ENCODE measurements at regions of chr17 and their contacts with region 1.

Region 1: DNA sequence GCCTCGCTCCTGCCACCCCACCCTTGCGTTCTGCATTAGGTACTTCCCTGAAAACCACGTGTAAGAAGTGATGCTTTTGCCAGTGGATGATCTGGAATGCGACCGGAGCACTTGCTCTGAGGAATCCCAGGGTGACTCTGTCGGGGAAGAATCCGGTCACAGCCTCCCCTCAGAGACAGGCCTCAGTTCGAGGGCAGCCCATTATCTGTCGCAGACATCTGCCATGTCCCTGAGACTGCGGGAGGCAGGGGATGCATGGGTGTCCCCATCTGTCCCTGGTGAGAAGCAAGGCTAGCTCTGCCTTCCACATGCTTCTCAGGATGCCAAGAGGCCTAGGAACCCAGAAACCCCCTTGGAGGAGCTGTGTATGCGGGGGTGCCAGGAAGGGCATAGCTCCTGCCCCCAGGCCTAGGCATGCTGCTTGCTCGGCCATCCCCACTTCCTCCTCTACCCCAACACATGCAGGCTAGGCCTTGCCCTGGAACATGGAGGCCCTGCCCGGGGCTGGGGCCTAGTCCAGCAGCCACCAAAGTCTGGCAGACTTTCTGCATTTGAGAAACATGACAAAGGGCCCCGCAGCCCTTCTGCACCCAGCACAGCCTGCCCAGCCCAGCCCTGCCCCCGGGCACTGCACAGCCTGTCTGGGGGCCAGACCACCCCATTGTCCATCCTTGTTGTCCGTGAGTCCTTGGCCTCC is 20.5 kb downstream of the MNT start:
- DNase-seq: no peak
- H3K4me3 ChIP-seq: no peak overlapping the region
- H3K27ac ChIP-seq: peak overlapping the region in 1 of 2 donors; percentile 32
- H3K4me1 ChIP-seq: peaks cover 2 to 12% (median 8%) of the 10 kb centered on the region in 3 donors
- H3K27me3 ChIP-seq: no peaks in the 10 kb centered on the region
- CTCF ChIP-seq: no peak

Region 2: GRCh38 chr17:2282297-2282873 is 98.0 kb before region 1 on chr17:
- intact Hi-C with region 1: no loop called
- DNase-seq: peak in 2 of 5 donors; percentile 83 to 91
- H3K4me3 ChIP-seq: no peak overlapping the region
- H3K27ac ChIP-seq: no peak overlapping the region
- H3K4me1 ChIP-seq: no peaks in the 10 kb centered on the region
- H3K27me3 ChIP-seq: no peaks in the 10 kb centered on the region
- CTCF ChIP-seq: peak; percentile 52

Region 3: DNA sequence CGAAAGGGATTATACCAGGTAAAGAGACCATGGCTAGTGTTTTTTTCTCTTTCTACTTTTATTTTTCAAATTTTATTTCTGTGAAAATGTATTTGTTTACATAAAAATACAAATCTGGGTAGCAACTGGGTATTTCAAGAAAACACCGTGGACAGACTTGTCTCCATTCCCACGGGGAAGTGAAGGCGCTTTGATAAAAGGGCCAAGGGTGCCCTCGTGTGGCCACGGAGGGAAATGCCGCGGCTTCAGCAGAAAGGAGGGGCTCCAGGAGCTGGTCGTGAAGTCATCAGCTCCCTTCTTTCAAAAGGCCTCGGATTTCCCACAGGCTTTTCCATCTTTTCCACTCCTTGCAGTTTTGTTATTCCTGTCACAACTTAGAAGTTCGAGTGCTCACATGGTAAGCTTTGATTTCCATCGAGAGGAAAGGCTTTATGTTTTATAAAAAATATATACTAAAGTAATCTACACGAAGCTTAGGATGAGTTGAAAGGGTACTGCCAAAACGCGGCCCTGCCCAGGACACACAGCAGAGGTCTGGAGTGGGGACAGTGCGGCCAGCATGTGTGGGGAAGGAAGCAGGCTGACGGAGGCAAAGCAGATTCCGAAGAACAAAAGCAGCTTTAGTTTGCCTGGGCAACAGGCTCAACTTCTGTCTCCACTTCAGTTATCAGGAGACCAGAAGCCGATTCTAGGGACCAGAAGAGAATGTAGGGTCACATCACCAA is 35.8 kb after region 1 on chr17:
- intact Hi-C with region 1: loop called (anchors 5 kb)
- DNase-seq: peak; percentile 91 to 94 (median 92)
- H3K4me3 ChIP-seq: no peak overlapping the region
- H3K27ac ChIP-seq: no peak overlapping the region
- H3K4me1 ChIP-seq: peaks cover 0 to 3% (median 0%) of the 10 kb centered on the region in 3 donors
- H3K27me3 ChIP-seq: no peaks in the 10 kb centered on the region
- CTCF ChIP-seq: peak; percentile 98

Measured in kidney (tissue), 22 donors.